Esophagus muscularis mucosa (tissue), 4 donors: ENCODE measurements at regions of chr6 and their contacts with region 1.

Region 1: GRCh38 chr6:29834564-29835436 is 7.2 kb downstream of the HLA-G start:
- DNase-seq: no peak
- H3K4me3 ChIP-seq: no peak overlapping the region
- H3K27ac ChIP-seq: no peak overlapping the region
- H3K4me1 ChIP-seq: peaks cover 0 to 4% (median 0%) of the 10 kb centered on the region in 4 donors
- H3K27me3 ChIP-seq: peaks cover 0 to 64% (median 0%) of the 10 kb centered on the region in 4 donors
- CTCF ChIP-seq: peak; percentile 51 to 94 (median 80)
- EP300 ChIP-seq: no peak
- POLR2A ChIP-seq: no peak

Region 2: DNA sequence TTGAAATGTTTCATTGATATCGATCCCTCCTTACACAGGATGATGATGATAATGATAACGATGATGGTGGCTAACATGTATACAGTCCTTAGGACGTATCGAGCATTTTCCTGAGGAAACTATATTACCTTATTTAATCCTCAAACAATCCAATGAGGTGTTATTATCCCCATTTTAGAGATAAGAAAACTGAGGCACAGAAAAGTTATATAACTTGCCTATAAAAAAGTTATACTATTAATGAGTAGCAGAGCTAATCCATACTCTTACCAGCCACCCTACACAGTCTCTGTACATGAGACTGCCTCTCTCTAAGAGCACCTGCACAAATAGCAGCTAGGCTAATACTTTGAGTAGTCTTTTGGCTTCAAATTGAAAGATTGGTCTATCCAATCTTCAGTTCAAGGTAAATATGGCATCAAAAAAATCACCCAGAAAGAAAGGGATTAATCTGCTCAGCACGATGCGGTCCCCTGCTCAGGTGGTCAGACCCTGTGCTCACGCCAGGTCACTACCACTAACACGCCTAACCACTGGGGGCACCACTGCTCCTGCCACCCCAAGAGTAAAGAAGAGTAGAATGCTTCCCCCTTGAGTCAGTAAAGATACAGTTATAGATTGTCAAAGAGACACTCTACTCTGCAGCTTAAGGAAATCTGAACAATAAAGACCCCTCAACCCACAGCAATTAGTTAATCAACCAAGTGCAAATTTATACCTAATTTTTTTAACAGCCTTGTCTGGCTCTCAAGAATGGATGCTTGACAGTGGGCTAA is 216.8 kb before region 1 on chr6:
- intact Hi-C with region 1: no loop called
- DNase-seq: no peak
- H3K4me3 ChIP-seq: no peak overlapping the region
- H3K27ac ChIP-seq: no peak overlapping the region
- H3K4me1 ChIP-seq: no peaks in the 10 kb centered on the region
- H3K27me3 ChIP-seq: no peaks in the 10 kb centered on the region
- CTCF ChIP-seq: peak in 1 of 3 experiments; percentile 16
- EP300 ChIP-seq: no peak
- POLR2A ChIP-seq: no peak

Region 3: GRCh38 chr6:29705389-29706231 is 129.2 kb before region 1 on chr6:
- intact Hi-C with region 1: loop called (anchors 2 kb)
- DNase-seq: no peak
- H3K4me3 ChIP-seq: no peak overlapping the region
- H3K27ac ChIP-seq: no peak overlapping the region
- H3K4me1 ChIP-seq: no peaks in the 10 kb centered on the region
- H3K27me3 ChIP-seq: peaks cover 0 to 46% (median 6%) of the 10 kb centered on the region in 4 donors
- CTCF ChIP-seq: peak; percentile 62 to 74 (median 67)
- EP300 ChIP-seq: no peak
- POLR2A ChIP-seq: no peak

Region 4: GRCh38 chr6:29737707-29738630 is 96.8 kb before region 1 on chr6:
- intact Hi-C with region 1: loop called (anchors 10 kb)
- DNase-seq: no peak
- H3K4me3 ChIP-seq: no peak overlapping the region
- H3K27ac ChIP-seq: no peak overlapping the region
- H3K4me1 ChIP-seq: peaks cover 0 to 3% (median 0%) of the 10 kb centered on the region in 4 donors
- H3K27me3 ChIP-seq: no peaks in the 10 kb centered on the region
- CTCF ChIP-seq: peak; percentile 59 to 74 (median 69)
- EP300 ChIP-seq: no peak
- POLR2A ChIP-seq: no peak

Region 5: GRCh38 chr6:29887819-29888776 is 53.3 kb after region 1 on chr6:
- intact Hi-C with region 1: no loop called
- DNase-seq: no peak
- H3K4me3 ChIP-seq: peak overlapping the region in 3 of 4 donors; percentile 55 to 66 (median 63)
- H3K27ac ChIP-seq: peak overlapping the region in 3 of 4 donors; percentile 86 to 93 (median 87)
- H3K4me1 ChIP-seq: peaks cover 0 to 15% (median 2%) of the 10 kb centered on the region in 4 donors
- H3K27me3 ChIP-seq: no peaks in the 10 kb centered on the region
- CTCF ChIP-seq: no peak
- EP300 ChIP-seq: no peak
- POLR2A ChIP-seq: no peak